ENCODE measurements at regions of chr6 and their contacts with region 1.

Region 1: DNA sequence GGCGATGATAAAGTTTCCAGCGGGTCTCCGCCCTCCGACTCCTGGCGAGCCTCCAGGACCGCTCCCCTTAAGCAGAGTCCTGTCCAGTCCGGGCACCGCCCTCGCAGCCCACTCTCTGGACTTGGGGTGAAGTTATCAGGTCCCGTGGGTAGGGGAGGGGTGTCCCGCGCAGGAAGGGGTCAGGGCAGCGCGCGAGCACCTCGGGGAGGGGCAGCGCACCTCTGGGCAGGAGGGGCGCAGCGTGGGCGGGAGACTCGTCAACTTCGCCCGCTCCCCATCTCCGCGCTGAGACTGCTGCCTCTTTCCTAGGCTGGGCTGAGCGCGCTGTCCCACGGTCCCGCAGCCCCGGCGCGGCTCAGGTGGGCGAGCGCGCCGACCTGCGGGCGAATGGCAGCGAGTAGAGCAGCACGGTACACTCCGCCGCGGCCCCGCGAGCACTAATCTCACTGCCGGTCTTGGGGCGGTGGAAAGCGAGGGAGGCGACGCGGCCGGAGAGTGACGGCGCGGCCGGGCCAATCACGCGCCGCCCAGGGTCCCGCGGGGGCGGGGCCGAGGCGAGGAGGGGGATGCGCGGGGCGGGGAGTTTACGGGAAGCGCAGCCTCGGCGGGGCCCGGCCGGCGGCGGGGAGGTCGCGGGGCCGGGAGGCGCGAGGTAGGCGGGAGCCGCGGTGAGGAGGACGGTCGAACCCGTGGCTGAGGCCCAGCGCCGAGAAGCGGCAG is at the start of gene MAN1A1:
- H3K4me3 ChIP-seq: peak within 1 kb of the TSS; percentile 95
- H3K27ac ChIP-seq: peak within 1 kb of the TSS; percentile 73; the same call in 1 of the 2 replicates
- H3K4me1 ChIP-seq: no peaks in the 10 kb centered on the region
- CTCF ChIP-seq: peak; percentile 81

Region 2: GRCh38 chr6:119333707-119334295 is 15.7 kb before region 1 on chr6:
- CTCF ChIA-PET with region 1: interaction called, 18 read pairs
- POLR2A ChIA-PET with region 1: interaction called, 7 read pairs
- H3K4me3 ChIP-seq: no peak overlapping the region
- H3K27ac ChIP-seq: no peak overlapping the region
- H3K4me1 ChIP-seq: no peaks in the 10 kb centered on the region
- CTCF ChIP-seq: no peak

Measured in HEK293 (cell line).